ENCODE measurements at regions of chr3 and their contacts with region 1.

Region 1: GRCh38 chr3:99859825-99860224 is 42.2 kb downstream of the CMSS1 start:
- DNase-seq: peak in 1 of 2 experiments; percentile 99
- H3K4me3 ChIP-seq: no peak overlapping the region
- H3K27ac ChIP-seq: peak overlapping the region; percentile 73
- H3K4me1 ChIP-seq: peaks cover 45% of the 10 kb centered on the region
- H3K27me3 ChIP-seq: no peaks in the 10 kb centered on the region
- CTCF ChIP-seq: no peak

Region 2: DNA sequence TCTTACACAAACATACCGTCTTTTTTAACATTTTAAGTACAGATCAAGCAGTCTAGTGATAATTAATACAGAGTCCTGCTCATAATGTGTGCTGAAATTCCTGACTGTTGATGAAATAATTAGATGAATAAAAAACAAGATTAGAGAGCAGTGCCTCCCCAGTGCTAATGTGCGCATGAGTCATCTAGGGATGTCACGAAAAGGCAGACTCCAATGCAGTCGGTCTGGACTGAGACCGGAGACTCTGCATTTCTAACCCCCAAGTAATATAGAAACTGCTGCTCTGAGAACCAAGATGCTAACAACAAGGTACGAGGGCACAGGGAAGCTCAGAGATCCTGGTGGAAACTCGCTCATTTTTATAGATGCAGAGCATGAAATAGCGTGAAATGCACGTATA is 160.0 kb before region 1 on chr3:
- CTCF ChIA-PET with region 1: no interaction called
- POLR2A ChIA-PET with region 1: no interaction called
- intact Hi-C with region 1: no loop called
- DNase-seq: no peak
- H3K4me3 ChIP-seq: no peak overlapping the region
- H3K27ac ChIP-seq: no peak overlapping the region
- H3K4me1 ChIP-seq: no peaks in the 10 kb centered on the region
- H3K27me3 ChIP-seq: no peaks in the 10 kb centered on the region
- CTCF ChIP-seq: no peak

Region 3: GRCh38 chr3:99875929-99876841 is 16.4 kb after region 1 on chr3:
- CTCF ChIA-PET with region 1: no interaction called
- POLR2A ChIA-PET with region 1: interaction called, 13 read pairs
- intact Hi-C with region 1: loop called (anchors 2 kb)
- DNase-seq: peak; percentile 76 to 86
- H3K4me3 ChIP-seq: peak overlapping the region; percentile 65
- H3K27ac ChIP-seq: peak overlapping the region; percentile 60
- H3K4me1 ChIP-seq: peaks cover 65% of the 10 kb centered on the region
- H3K27me3 ChIP-seq: no peaks in the 10 kb centered on the region
- CTCF ChIP-seq: no peak

Region 4: GRCh38 chr3:100210772-100211135 is 350.9 kb after region 1 on chr3:
- CTCF ChIA-PET with region 1: no interaction called
- POLR2A ChIA-PET with region 1: no interaction called
- intact Hi-C with region 1: no loop called
- DNase-seq: no peak
- H3K4me3 ChIP-seq: no peak overlapping the region
- H3K27ac ChIP-seq: no peak overlapping the region
- H3K4me1 ChIP-seq: no peaks in the 10 kb centered on the region
- H3K27me3 ChIP-seq: no peaks in the 10 kb centered on the region
- CTCF ChIP-seq: no peak

Measured in PC-9 (cell line).